HCT116 (cell line): ENCODE measurements at regions of chr12 and their contacts with region 1.

Region 1: GRCh38 chr12:52895061-52895887 is 9.6 kb downstream of the KRT8 start:
- DNase-seq: no peak
- ATAC-seq: peak; percentile 50
- H3K4me3 ChIP-seq: no peak overlapping the region
- H3K27ac ChIP-seq: peak overlapping the region; percentile 67
- H3K4me1 ChIP-seq: peaks cover 41 to 47% of the 10 kb centered on the region in 2 experiments
- H3K27me3 ChIP-seq: no peaks in the 10 kb centered on the region
- CTCF ChIP-seq: no peak
- POLR2A ChIP-seq: no peak
- RAD21 ChIP-seq: no peak

Region 2: GRCh38 chr12:52789637-52790426 is 105.4 kb before region 1 on chr12:
- CTCF ChIA-PET with region 1: no interaction called
- POLR2A ChIA-PET with region 1: no interaction called
- RAD21 ChIA-PET with region 1: no interaction called
- intact Hi-C with region 1: no loop called
- DNase-seq: no peak
- ATAC-seq: no peak
- H3K4me3 ChIP-seq: no peak overlapping the region
- H3K27ac ChIP-seq: no peak overlapping the region
- H3K4me1 ChIP-seq: peaks cover 0 to 8% of the 10 kb centered on the region in 2 experiments; a peak in 1 of 4 replicates
- H3K27me3 ChIP-seq: peaks cover 5% of the 10 kb centered on the region; the same call in 1 of the 2 replicates
- CTCF ChIP-seq: no peak
- POLR2A ChIP-seq: no peak
- RAD21 ChIP-seq: no peak

Region 3: DNA sequence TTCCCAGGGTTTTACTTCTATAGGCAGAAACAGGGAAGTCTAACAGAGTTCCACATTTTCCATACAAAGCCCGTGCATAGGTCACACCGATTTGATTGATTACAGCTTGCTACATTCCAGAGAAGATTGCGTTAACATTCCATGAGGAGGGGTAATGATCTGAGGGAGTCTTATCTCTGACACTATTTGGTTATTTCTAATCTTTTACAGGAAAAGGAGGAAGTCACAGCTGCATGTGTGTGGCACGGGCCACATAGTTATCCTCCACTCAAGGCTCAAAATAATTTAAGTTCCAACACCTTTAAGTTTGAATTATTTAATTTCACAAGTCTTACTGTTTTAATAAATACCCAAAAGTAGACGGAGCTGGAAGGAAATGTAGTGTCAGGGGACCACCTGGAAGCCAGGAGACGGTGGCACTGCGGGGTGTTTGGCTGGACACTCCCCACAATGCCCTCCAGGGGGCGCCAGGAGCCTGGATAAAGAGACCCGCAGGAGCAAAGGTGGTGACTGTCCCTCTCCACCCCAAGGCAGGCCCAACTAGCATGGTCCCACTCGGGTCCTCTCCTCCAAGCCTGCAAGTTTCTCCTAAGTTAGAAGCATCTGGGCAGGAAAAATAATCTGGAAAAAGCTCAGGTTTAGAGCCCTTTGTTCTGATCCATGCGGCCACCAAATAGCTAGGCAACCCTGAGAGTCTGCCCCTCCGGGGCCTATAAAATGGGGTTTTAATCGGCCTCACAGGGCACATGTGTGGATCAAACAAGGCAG is 10.6 kb before region 1 on chr12:
- CTCF ChIA-PET with region 1: interaction called, 29 read pairs
- POLR2A ChIA-PET with region 1: interaction called, 15 read pairs
- RAD21 ChIA-PET with region 1: interaction called, 6 to 7 read pairs
- intact Hi-C with region 1: no loop called
- DNase-seq: no peak
- ATAC-seq: peak; percentile 85
- H3K4me3 ChIP-seq: no peak overlapping the region
- H3K27ac ChIP-seq: no peak overlapping the region
- H3K4me1 ChIP-seq: peaks cover 16 to 35% of the 10 kb centered on the region in 2 experiments; a peak in 3 of 4 replicates
- H3K27me3 ChIP-seq: no peaks in the 10 kb centered on the region
- CTCF ChIP-seq: peak; percentile 87 to 99 (median 97)
- POLR2A ChIP-seq: no peak
- RAD21 ChIP-seq: peak; percentile 100

Region 4: DNA sequence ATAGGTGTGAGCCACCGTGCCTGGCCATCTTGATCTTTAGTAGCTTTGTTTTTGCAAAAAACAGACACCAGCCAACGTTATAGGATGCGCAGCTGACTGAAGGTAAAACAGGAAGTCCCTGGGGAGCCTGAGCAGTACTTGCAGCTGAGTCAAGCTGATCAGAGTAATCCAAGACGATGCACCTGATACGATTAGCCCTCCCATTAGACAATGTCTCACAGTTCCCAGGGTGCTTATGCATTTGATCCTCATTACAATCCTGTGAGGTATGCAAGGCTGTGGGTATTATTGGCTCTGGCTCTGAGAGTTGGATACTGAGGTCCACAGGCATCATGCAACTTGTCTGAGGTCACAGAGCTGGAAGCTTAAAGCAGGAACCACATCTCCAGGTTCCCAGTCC is 61.7 kb after region 1 on chr12:
- CTCF ChIA-PET with region 1: interaction called, 7 read pairs
- POLR2A ChIA-PET with region 1: interaction called, 379 read pairs
- RAD21 ChIA-PET with region 1: interaction called in 1 of 2 experiments, 3 read pairs
- intact Hi-C with region 1: no loop called
- DNase-seq: no peak
- ATAC-seq: no peak
- H3K4me3 ChIP-seq: no peak overlapping the region
- H3K27ac ChIP-seq: no peak overlapping the region
- H3K4me1 ChIP-seq: peaks cover 22 to 42% of the 10 kb centered on the region in 2 experiments
- H3K27me3 ChIP-seq: no peaks in the 10 kb centered on the region
- CTCF ChIP-seq: no peak
- POLR2A ChIP-seq: no peak
- RAD21 ChIP-seq: no peak

Region 5: GRCh38 chr12:53180220-53180930 is 285.1 kb after region 1 on chr12 and contains the starts of genes CSAD and ZNF740:
- CTCF ChIA-PET with region 1: no interaction called
- POLR2A ChIA-PET with region 1: no interaction called
- RAD21 ChIA-PET with region 1: no interaction called
- intact Hi-C with region 1: no loop called
- DNase-seq: peak; percentile 95
- ATAC-seq: peak; percentile 96
- H3K4me3 ChIP-seq: peak within 1 kb of the TSS; percentile 78 to 86
- H3K27ac ChIP-seq: peak within 1 kb of the TSS; percentile 85
- H3K4me1 ChIP-seq: peaks cover 15 to 32% of the 10 kb centered on the region in 2 experiments
- H3K27me3 ChIP-seq: no peaks in the 10 kb centered on the region
- CTCF ChIP-seq: no peak
- POLR2A ChIP-seq: no peak
- RAD21 ChIP-seq: no peak
- total RNA-seq, gene CSAD: 20.3 TPM
- total RNA-seq, gene ZNF740: 49.7 TPM

Region 6: DNA sequence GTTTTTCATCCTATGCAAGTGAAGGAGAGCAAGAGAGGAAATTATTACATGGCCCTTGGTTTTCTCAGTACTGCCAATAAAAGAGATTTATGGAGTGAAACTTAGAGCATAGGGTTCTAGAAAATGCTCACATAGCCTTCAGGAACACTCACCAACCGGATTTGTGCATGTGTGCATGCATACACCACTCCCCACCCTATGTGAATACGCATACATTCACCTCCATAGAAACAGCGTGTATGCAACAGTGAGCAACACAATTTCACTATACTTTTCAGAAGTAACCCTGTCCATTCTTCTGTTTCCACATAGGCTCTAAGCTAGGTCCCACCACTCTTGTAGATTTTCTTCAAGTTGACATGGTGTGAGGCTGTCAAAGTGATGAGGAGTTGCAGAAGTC is 1011.8 kb after region 1 on chr12:
- CTCF ChIA-PET with region 1: no interaction called
- POLR2A ChIA-PET with region 1: no interaction called
- RAD21 ChIA-PET with region 1: no interaction called
- intact Hi-C with region 1: no loop called
- DNase-seq: no peak
- ATAC-seq: no peak
- H3K4me3 ChIP-seq: no peak overlapping the region
- H3K27ac ChIP-seq: no peak overlapping the region
- H3K4me1 ChIP-seq: no peaks in the 10 kb centered on the region
- H3K27me3 ChIP-seq: 0 out of 2 replicates have a peak, but pooled peaks cover 1% of the 10 kb centered on the region
- CTCF ChIP-seq: no peak
- POLR2A ChIP-seq: no peak
- RAD21 ChIP-seq: no peak